GM23248 (cell line): ENCODE measurements at regions of chr16 and their contacts with region 1.

Region 1: DNA sequence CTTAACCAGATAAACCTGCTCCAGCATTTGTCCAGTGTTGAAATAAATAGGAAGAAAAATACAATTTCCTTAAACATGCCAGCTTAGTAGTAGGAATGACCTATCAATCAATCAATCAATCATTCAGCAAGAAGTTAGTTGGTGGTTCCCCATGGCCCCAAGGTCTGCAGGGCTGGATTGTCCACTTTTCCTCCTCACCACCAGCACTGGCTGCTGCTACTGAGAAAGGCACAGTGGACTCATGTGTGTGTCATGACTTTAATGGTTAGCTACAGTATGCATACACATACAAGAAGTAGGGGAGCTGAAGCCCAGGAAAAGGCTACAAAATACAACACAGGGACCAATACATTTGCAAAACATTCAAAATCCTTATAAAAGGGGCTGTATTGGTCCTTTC is 4.4 kb downstream of the SETD6 start:
- DNase-seq: no peak
- H3K4me3 ChIP-seq: no peak overlapping the region
- H3K27ac ChIP-seq: no peak overlapping the region
- H3K4me1 ChIP-seq: no peaks in the 10 kb centered on the region
- H3K27me3 ChIP-seq: no peaks in the 10 kb centered on the region

Region 2: GRCh38 chr16:58449768-58450167 is 69.9 kb before region 1 on chr16:
- in situ Hi-C with region 1: no loop called
- DNase-seq: no peak
- H3K4me3 ChIP-seq: no peak overlapping the region
- H3K27ac ChIP-seq: no peak overlapping the region
- H3K4me1 ChIP-seq: no peaks in the 10 kb centered on the region
- H3K27me3 ChIP-seq: 0 out of 2 replicates have a peak, but pooled peaks cover 7% of the 10 kb centered on the region

Region 3: DNA sequence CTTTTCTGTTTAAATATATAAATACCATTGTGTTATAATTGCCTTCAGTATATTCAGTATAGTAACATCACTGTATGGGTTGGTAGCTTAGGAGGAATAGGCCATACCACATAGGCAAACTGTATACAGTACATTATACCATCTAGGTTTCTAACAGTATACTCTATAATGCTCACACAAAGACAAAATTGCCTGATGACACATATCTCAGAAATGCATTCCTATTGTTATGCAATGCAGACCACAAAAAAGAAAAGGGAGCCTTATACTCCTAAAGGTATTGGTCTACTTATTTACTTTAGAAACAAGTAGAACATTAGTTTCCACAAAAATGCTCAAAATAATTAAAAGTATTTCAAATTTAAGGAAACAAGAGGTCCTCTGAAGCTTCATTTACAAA is 43.5 kb after region 1 on chr16:
- in situ Hi-C with region 1: no loop called
- DNase-seq: peak; percentile 73
- H3K4me3 ChIP-seq: no peak overlapping the region
- H3K27ac ChIP-seq: no peak overlapping the region
- H3K4me1 ChIP-seq: peaks cover 12% of the 10 kb centered on the region
- H3K27me3 ChIP-seq: no peaks in the 10 kb centered on the region

Region 4: DNA sequence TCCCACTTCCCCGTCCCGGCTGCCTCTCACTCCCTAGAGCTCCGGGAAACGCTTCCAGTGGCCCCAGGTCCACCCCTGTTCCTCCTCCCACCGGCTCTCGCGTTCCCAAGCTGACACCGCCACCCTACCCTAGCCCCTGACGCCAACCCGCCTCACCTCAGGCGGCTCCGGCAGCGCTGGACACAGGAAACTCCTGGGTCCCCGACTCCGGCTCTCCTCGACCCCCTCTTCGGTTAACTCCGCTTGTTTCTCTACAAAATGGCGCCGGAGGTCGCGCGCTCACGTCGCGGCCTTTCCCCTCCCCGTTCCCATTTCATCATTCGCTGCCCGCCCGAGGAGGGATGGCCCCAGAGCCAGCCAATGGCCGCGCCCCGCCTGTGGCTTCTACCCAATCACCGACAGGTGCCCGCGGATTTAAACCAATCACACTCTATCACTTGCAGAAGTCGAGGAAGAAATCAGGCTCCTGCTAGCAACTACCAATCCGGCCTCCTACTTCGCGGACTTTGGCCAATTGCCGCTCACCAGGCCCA is 109.9 kb after region 1 on chr16 and contains the start of gene CNOT1:
- in situ Hi-C with region 1: loop called (anchors 10 kb)
- DNase-seq: peak; percentile 99
- H3K4me3 ChIP-seq: peak within 1 kb of the TSS; percentile 85
- H3K27ac ChIP-seq: peak within 1 kb of the TSS; percentile 98
- H3K4me1 ChIP-seq: peaks cover 17% of the 10 kb centered on the region
- H3K27me3 ChIP-seq: no peaks in the 10 kb centered on the region
- total RNA-seq, gene CNOT1: 82.8 and 93.1 TPM in 2 replicates